ENCODE measurements at regions of chr14 and their contacts with region 1.

Region 1: DNA sequence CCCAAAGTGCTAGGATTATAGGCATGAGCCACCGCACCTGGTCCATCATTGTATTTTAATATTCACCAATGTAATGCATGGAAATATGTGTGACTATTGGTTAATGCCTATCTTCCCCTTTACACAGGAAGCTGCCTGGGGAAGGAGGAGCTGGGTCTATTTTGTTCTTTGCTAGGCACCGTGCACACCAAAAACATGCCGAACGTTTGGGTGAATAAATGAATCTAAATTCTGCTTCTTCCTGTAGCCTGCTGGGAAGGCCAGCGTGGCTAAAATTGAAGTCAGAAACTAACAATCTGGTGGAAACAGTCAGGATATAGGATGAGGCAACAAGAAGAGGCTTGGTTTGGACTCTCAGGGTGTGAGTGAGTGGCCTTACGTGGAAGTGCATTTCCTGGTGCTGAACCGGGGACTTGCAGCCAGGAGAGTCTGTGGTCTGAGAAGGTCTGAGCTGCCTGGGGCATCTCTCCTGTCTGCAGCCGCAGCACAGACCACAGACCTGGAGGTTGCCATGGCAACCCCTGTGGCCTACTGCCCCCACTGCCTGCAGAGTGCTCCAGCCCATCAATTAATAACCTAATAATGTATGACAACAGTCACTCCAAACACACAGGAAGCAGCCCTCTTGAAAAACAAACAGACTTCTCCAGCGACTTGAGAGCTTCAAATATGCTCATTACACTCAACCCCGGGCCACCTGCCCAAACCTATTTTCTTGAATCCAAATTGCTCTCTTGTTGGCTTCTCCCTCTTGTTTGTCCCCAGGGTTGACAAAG is 5.5 kb upstream of the GPR68 start:
- DNase-seq: peak in 4 of 5 donors; percentile 46 to 79 (median 53)
- H3K4me3 ChIP-seq: peak overlapping the region; percentile 30
- H3K4me3 Mint-ChIP-seq: peak overlapping the region; percentile 60 to 81 (median 77)
- H3K27ac ChIP-seq: peak overlapping the region; percentile 79
- H3K27ac Mint-ChIP-seq: peak overlapping the region; percentile 90 to 98 (median 93)
- H3K4me1 ChIP-seq: peaks cover 87% of the 10 kb centered on the region
- H3K4me1 Mint-ChIP-seq: peaks cover 74 to 89% (median 89%) of the 10 kb centered on the region in 3 donors
- H3K27me3 ChIP-seq: no peaks in the 10 kb centered on the region
- H3K27me3 Mint-ChIP-seq: peaks cover 0 to 2% of the 10 kb centered on the region in 2 donors

Region 2: GRCh38 chr14:91228112-91229004 is 21.7 kb before region 1 on chr14:
- CTCF ChIA-PET with region 1: interaction called, 37 read pairs
- POLR2A ChIA-PET with region 1: interaction called, 88 read pairs
- DNase-seq: peak; percentile 62 to 91 (median 78)
- H3K4me3 ChIP-seq: peak overlapping the region; percentile 29
- H3K4me3 Mint-ChIP-seq: peak overlapping the region; percentile 16 to 89 (median 85)
- H3K27ac ChIP-seq: peak overlapping the region; percentile 58
- H3K27ac Mint-ChIP-seq: peak overlapping the region; percentile 87 to 99 (median 98)
- H3K4me1 ChIP-seq: peaks cover 97% of the 10 kb centered on the region
- H3K4me1 Mint-ChIP-seq: peaks cover 86 to 100% (median 94%) of the 10 kb centered on the region in 3 donors
- H3K27me3 ChIP-seq: no peaks in the 10 kb centered on the region
- H3K27me3 Mint-ChIP-seq: peaks cover 0 to 1% of the 10 kb centered on the region in 2 donors